HepG2 (cell line): ENCODE measurements at regions of chr2 and their contacts with region 1.

Region 1: GRCh38 chr2:232563580-232563979 is 13.1 kb downstream of the EIF4E2 start:
- DNase-seq: no peak
- ATAC-seq: no peak
- H3K4me3 ChIP-seq: no peak overlapping the region
- H3K27ac ChIP-seq: no peak overlapping the region
- H3K4me1 ChIP-seq: no peaks in the 10 kb centered on the region
- H3K27me3 ChIP-seq: no peaks in the 10 kb centered on the region
- CTCF ChIP-seq: no peak
- EP300 ChIP-seq: no peak
- POLR2A ChIP-seq: no peak
- RAD21 ChIP-seq: no peak

Region 2: DNA sequence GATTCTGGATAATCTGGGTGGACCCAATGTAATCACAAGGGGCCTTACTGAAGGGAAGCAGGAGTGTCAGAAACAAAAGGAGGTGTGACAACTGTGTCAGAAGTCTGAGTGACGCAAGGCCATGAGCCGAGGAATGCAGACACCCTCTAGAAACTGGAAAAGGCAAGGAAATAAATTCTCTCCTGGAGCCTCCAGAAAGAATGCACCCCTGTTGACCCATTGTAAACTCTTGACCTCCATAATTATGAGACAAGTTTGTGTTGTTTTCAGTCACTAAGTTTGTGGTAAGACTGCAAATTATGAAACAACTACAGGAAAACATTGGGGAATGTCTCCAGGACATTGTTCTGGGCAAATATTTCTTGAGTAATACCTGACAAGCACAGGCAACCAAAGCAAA is 1215.4 kb before region 1 on chr2:
- CTCF ChIA-PET with region 1: no interaction called
- POLR2A ChIA-PET with region 1: no interaction called
- in situ Hi-C with region 1: no loop called
- intact Hi-C with region 1: loop called (anchors 5 kb)
- DNase-seq: peak; percentile 28
- ATAC-seq: no peak
- H3K4me3 ChIP-seq: no peak overlapping the region
- H3K27ac ChIP-seq: no peak overlapping the region
- H3K4me1 ChIP-seq: 0 out of 2 replicates have a peak, but pooled peaks cover 4% of the 10 kb centered on the region
- H3K27me3 ChIP-seq: no peaks in the 10 kb centered on the region
- CTCF ChIP-seq: no peak
- EP300 ChIP-seq: no peak
- POLR2A ChIP-seq: no peak
- RAD21 ChIP-seq: no peak